Activated CD4-positive, alpha-beta T cell treated with anti-CD3 and anti-CD28 coated beads, Interleukin-2, amount 10 ng/mL, durations not matched to agents 7 days and 5 days (primary cell): ENCODE measurements at regions of chr12 and their contacts with region 1.

Region 1: DNA sequence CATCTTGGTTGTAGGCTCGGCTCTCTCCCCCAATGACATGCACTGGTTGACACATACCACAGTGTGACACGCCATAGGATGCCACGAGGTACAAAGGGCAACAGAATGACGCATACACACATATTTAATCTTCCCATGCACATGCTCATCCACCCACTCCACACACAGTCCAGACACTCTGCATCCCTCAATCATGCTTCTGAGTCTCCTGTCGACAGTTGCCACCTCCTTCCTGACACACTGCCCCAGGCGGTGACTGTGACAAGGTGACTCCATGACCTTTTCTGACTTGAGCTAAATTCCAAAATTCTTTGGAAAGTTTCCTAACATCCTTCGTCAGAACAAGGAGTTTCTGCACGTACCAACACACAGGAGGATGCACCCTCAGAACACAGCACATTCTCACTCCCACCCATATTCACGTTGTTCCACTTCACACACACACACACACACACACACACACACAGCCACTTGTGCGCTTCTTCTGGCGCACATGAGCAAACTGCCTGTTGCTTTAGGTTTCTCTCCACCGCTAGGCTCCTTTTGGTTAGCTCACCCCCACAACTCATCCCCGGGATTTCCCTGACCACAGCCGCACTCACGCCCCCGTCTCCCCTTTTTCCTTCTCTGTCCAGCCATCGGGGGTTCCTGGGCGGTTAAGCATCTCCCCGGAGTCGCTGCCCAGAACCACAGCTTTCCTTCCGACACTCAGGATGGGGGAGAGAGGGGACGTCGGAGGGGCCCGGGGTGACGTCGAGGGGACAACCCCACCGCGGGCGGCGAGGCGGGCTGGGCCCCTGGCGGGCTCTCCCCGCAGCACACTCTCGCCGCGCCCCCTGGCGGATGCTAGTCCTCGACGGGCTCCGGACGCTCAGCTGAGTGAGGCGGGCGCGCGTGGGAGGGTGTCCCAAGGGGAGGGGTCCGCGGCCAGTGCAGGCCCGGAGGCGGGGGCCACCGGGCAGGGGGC is 524 bp upstream of the WNT1 start:
- DNase-seq: peak; percentile 74
- H3K4me3 Mint-ChIP-seq: peak overlapping the region; percentile 22
- H3K27ac Mint-ChIP-seq: no peak overlapping the region
- H3K4me1 Mint-ChIP-seq: peaks cover 52% of the 10 kb centered on the region
- H3K27me3 Mint-ChIP-seq: peaks cover 92% of the 10 kb centered on the region

Region 2: GRCh38 chr12:48779869-48780268 is 197.7 kb before region 1 on chr12:
- CTCF ChIA-PET with region 1: no interaction called
- POLR2A ChIA-PET with region 1: no interaction called
- DNase-seq: no peak
- H3K4me3 Mint-ChIP-seq: no peak overlapping the region
- H3K27ac Mint-ChIP-seq: no peak overlapping the region
- H3K4me1 Mint-ChIP-seq: no peaks in the 10 kb centered on the region
- H3K27me3 Mint-ChIP-seq: peaks cover 2% of the 10 kb centered on the region

Region 3: DNA sequence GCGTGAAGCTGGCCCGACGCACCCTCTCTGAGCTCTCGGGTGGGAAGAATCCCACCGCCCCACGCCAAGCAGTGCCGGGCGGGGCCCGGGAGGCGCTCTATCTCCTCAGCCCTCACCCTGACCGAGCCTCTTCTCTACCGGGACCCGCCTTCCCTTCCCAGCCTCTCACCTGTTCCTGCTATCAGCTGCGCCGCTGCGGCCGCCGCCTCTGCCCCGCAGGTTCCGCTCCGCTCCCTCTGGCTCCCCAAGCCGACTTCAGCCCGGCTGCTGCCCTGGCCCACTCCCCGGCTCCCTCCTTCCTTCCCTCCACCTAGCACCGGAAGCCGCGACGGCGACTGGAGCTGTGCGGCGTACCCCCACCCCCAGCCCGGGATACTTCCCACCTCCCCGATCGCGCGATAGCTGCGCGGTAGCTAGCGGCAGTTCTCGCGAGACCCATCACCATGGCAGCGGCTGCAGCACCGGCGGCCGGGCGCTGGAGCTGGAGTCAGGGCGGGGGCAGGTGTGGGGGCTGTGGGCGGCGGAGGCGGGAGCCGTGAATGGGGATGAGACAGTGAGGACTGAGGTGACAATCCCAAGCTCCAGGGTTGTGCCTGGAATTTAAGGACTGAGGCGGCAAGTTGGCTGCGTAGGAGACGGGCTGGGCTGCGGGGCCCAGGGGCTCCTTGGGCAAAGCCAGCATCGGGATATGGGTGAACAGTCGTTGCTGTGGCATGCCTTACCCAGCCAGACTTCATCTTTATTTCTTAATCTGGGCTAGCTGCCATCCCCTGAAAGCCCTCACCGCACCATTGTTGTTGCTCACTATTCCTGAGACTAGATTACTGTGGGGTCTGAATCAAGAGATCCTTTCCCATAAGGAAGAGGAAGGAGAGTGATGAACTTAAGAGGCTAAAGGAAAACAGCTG is 20.2 kb before region 1 on chr12 and contains the start of gene ARF3:
- CTCF ChIA-PET with region 1: interaction called, 84 read pairs
- POLR2A ChIA-PET with region 1: no interaction called
- DNase-seq: peak; percentile 95
- H3K4me3 Mint-ChIP-seq: peak within 1 kb of the TSS; percentile 98
- H3K27ac Mint-ChIP-seq: peak within 1 kb of the TSS; percentile 90
- H3K4me1 Mint-ChIP-seq: peaks cover 29% of the 10 kb centered on the region
- H3K27me3 Mint-ChIP-seq: peaks cover 18% of the 10 kb centered on the region
- total RNA-seq, gene ARF3: 89.6 to 114 TPM

Region 4: DNA sequence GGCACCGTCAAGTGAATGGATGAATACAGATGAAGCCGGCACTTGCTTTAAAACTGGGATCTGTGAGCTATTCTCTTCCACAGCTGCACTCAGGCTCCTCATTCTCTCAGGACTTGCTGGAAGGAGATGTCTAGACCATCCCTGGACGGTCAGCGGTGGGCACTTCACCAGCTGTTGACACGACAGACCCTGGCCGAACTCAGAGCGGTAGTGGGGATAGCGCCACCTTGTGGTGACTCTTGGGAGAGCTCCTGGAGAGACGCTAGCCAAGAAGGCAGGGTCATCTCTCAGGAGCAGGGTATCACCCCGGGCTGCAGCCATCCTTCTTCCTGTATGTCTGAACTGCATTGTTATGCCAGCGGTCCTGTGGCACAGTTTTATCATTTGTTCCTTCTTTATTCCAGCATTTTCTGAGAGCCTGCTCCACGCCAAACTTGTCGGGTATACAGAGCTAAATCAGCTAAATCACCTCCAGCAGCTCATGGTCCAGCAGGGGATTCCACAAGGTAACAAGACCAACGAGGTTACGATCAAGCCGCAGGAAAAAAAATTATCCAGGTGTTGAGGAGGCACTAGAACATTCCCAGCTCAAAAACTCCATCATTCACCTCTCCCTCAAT is 10.5 kb after region 1 on chr12:
- CTCF ChIA-PET with region 1: interaction called, 110 read pairs
- POLR2A ChIA-PET with region 1: no interaction called
- DNase-seq: peak; percentile 76
- H3K4me3 Mint-ChIP-seq: no peak overlapping the region
- H3K27ac Mint-ChIP-seq: no peak overlapping the region
- H3K4me1 Mint-ChIP-seq: peaks cover 8% of the 10 kb centered on the region
- H3K27me3 Mint-ChIP-seq: peaks cover 54% of the 10 kb centered on the region

Region 5: DNA sequence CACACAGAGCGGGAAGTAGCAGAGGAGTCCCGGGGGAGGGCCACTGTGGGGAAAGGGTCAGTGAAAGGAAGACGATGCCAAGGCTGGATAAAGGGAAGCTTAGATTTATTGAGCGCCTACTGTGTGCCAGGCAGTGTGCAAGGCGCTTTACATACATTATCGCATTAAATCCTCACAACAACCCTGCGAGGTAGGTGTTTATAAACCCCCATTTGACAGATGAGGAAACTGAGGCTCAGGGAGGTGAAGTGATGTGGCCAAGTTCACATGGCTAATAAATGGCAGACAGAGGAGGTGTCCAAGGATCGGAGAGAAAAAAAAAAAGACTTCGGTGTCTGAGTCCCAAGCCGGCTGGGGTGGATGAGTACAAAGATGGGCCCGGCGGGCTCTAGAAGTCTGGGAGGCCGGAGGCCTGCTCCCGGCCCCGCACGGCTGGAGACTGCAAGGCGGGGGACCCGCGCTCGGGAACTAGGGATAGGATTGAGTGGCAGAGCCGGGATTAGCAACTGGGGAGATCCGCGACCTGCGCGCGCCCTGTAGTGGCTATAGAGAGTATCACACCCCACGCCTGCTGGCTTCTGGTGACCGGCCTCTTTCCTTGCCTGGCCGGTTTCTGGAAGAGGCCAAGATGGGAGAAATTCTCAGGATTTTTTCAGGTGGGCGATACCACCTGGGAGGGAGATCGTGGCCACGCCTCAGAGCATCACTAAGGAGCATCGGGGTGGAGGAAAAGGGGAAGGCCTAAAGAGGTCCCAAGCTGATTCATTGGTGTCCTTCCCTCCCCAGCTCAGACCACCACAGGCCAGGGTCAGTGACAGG is 17.7 kb after region 1 on chr12:
- CTCF ChIA-PET with region 1: interaction called, 110 read pairs
- POLR2A ChIA-PET with region 1: interaction called, 3 read pairs
- DNase-seq: peak; percentile 52
- H3K4me3 Mint-ChIP-seq: no peak overlapping the region
- H3K27ac Mint-ChIP-seq: no peak overlapping the region
- H3K4me1 Mint-ChIP-seq: peaks cover 32% of the 10 kb centered on the region
- H3K27me3 Mint-ChIP-seq: peaks cover 66% of the 10 kb centered on the region